CD14-positive monocyte (primary cell): ENCODE measurements at regions of chr4 and their contacts with region 1.

Region 1: DNA sequence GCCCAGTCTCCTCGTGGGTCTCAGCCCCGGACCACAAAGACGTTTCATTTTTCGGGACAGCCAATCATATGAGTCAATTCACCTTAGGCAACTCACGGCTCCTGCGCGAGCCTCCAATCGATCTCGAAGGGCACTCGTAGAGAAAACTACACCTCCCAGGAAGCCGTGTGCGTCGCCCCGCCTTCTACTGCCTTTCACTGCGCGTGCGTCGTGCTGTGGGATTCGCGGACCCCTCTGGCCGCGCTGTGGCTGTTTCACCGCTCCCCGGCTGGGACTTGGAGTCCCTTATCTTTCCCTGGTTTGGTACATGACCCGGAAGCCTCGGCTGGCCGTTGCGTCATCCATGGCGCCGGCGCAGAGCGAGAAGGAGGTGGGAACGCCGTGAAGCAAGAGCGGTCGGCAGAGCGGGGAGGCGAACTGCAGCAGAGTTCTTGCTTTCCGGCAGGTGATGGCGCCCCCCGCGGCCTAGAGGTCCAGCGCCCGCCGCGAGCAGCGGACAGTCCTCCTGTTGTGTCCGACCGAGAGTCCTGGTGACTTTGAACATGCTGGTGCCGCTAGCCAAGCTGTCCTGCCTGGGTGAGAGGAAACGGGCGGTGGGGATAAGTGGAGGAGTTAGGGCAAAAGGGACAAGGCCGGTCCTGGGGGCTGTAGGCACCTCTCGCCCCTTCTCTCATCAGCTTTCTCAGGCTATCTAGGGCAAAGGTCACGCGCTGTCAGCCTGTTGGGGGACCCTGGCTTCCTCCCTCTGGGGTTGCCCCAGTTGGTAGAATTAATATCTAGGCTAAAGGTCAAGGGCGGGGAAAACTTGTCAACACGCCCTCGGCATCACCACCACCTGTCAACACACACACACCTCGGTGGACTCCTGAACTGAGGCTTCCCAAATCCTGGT is at the start of gene ETFDH:
- DNase-seq: peak; percentile 96 to 99 (median 99)
- H3K4me3 ChIP-seq: peak within 1 kb of the TSS; percentile 73 to 99 (median 98)
- H3K4me3 Mint-ChIP-seq: peak within 1 kb of the TSS; percentile 96 to 97
- H3K27ac ChIP-seq: peak within 1 kb of the TSS; percentile 94 to 95
- H3K27ac Mint-ChIP-seq: peak within 1 kb of the TSS; percentile 92 to 99 (median 97)
- H3K4me1 ChIP-seq: peaks cover 20 to 32% of the 10 kb centered on the region in 2 donors
- H3K4me1 Mint-ChIP-seq: peaks cover 28% of the 10 kb centered on the region
- H3K27me3 ChIP-seq: no peaks in the 10 kb centered on the region
- H3K27me3 Mint-ChIP-seq: no peaks in the 10 kb centered on the region
- CTCF ChIP-seq: peak; percentile 60
- polyA plus RNA-seq, gene ETFDH: 11.9 to 17.8 (median 16.8) TPM

Region 2: DNA sequence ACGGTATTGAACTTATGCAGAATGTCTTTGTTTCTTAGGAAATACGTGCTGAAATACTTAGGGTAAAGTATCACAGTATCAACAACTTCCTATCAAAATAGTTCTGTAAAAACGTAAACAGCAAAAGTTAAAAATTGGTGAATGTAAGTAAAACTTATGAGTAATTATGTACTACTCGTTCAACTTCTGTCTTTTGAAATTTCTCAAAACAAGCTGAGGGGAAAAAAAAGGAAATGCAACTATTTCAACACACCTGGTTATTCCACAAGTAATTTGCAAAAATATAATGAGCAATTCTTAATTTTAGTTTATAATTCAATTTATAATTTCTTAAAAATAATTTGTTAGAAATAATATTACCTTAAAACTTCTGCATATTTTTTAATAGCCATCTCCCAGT is 42.8 kb after region 1 on chr4:
- intact Hi-C with region 1: loop called (anchors 5 to 10 kb)
- DNase-seq: peak; percentile 19 to 71 (median 60)
- H3K4me3 ChIP-seq: no peak overlapping the region
- H3K4me3 Mint-ChIP-seq: no peak overlapping the region
- H3K27ac ChIP-seq: peak overlapping the region; percentile 63 to 67
- H3K27ac Mint-ChIP-seq: peak overlapping the region; percentile 43 to 90 (median 79)
- H3K4me1 ChIP-seq: peaks cover 8 to 9% of the 10 kb centered on the region in 2 donors
- H3K4me1 Mint-ChIP-seq: peaks cover 11% of the 10 kb centered on the region
- H3K27me3 ChIP-seq: no peaks in the 10 kb centered on the region
- H3K27me3 Mint-ChIP-seq: no peaks in the 10 kb centered on the region
- CTCF ChIP-seq: no peak

Region 3: GRCh38 chr4:159577241-159577640 is 905.1 kb after region 1 on chr4:
- intact Hi-C with region 1: no loop called
- DNase-seq: no peak
- H3K4me3 ChIP-seq: no peak overlapping the region
- H3K4me3 Mint-ChIP-seq: no peak overlapping the region
- H3K27ac ChIP-seq: no peak overlapping the region
- H3K27ac Mint-ChIP-seq: no peak overlapping the region
- H3K4me1 ChIP-seq: no peaks in the 10 kb centered on the region
- H3K4me1 Mint-ChIP-seq: no peaks in the 10 kb centered on the region
- H3K27me3 ChIP-seq: no peaks in the 10 kb centered on the region
- H3K27me3 Mint-ChIP-seq: peaks cover 0 to 3% (median 0%) of the 10 kb centered on the region in 3 donors
- CTCF ChIP-seq: no peak